ENCODE measurements at regions of chr12 and their contacts with region 1.

Region 1: GRCh38 chr12:111451649-111452129 is 46.0 kb downstream of the SH2B3 start:
- DNase-seq: peak; percentile 54
- CTCF ChIP-seq: peak; percentile 72

Region 2: DNA sequence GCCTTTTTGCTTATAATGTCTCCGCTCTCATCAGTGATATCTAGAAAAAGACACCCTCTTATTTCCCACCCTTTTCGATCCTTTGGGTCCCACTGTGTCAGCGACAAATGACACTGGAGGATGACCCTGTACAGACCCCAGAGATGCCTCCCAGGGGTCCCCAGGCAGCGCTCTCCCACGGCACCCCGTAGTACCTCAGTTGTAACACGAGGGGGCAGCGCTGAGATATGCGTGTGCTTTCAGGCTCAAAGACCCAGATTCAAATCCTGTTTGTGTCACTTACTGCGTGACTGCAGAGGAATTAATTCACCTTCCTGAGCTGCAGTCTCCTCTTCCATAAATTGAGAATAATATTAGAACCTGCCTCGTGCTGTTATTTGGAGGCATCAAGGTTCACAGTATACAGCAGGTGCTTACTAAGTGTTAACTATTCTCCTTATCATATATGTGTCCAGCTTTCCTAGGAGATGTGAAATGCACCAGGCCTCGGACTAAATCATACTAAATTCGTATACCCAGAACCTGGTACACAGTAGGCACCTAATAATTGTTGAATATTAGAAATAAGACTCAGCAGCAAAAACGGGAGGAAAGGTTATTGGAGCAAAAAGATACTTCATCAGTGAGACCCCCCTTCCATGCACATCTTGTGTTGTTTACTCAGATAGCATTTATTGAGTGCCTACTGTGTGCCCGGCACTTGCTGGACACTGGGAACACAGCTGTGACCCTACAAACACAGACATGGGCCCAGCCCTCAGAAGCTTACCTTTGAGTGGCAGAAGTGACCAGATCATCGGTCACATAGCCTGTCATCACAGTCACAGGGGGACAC is 182.7 kb before region 1 on chr12:
- CTCF ChIA-PET with region 1: no interaction called
- POLR2A ChIA-PET with region 1: no interaction called
- DNase-seq: peak; percentile 43
- CTCF ChIP-seq: peak; percentile 28

Region 3: DNA sequence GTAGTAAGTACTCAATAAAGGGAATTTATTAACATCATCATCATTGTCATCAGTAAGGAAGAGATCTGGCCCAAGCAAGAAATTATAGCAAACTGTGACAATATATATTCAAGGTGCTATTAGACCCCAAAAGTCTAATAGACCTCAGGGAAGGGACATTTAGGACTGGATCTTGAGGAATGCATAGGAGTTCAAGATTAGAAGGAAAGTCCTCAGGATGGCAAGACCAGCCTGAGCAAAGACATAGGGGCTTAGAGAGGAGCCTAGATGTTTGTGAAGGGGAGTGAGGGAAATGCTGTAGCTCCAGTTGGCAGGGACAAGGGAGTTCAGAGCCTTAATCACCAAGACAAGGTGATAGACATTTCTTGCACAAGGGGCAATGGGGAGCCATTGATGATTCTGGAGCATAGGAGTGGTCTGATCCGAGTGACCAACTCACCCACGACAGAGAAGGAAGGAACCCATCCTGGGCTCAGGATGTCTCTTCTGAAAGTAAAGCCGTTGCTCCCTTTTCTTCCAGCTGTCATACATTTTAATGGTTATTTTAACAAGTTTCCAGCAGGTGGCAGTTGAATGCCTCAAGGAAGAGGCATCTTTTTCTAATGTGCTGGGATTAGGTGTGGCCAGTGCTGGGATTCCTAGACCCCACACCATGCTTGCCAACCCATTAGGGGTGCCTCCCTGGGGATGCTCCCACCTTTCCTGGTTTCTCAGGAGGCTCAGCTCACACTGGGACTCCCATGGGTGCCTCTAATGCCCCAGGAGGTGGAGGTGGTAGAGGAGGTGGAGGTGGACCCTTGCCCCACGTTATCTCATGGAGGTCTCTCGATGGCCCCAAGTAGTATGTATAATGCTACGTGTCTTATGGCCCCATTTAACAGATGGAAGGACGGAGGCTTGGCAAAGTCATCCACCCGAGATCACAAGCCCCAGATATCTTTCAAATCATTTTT is 120.6 kb before region 1 on chr12:
- CTCF ChIA-PET with region 1: interaction called, 23 read pairs
- POLR2A ChIA-PET with region 1: no interaction called
- DNase-seq: peak; percentile 59
- CTCF ChIP-seq: peak; percentile 44

Region 4: DNA sequence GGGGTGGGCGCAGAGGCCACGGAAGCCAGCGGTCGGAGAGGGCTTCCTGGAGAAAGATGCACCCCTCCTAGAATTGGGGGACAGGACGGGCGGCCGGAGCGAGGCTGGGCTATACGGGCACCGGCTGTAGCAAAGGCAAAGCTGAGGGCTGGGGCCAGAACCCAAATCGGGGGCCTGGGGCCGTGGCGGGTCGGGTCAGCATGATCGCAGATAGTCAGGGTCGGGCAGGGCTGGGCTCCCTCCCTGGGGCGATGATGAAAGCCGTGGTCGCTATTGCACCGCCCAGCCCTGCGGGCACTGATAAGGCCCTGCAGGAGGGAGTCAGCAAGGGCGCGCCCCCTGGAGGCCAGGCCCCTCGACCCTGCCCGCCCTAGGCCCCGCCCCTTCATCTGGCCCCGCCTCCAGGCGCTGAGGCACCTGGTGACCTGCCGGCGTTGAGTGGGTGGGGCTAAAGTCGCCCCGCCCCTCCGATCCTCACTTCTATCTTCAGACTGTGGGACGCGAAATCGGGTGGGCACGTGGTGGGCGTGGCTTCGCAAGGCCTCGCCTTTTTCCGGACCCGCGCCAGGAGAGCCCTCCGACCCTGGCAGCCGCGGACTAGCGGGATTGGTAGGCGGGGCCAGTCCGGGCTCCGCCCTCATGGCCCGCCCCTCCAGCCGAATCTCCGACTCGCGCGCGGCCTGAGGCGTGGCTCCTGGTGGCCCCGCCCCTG is 46.4 kb before region 1 on chr12:
- CTCF ChIA-PET with region 1: interaction called, 1,216 read pairs
- POLR2A ChIA-PET with region 1: interaction called, 3 read pairs
- DNase-seq: peak; percentile 98
- CTCF ChIP-seq: peak; percentile 61

Region 5: GRCh38 chr12:111434680-111435338 is 16.9 kb before region 1 on chr12:
- CTCF ChIA-PET with region 1: interaction called, 40 read pairs
- POLR2A ChIA-PET with region 1: interaction called, 5 read pairs
- DNase-seq: peak; percentile 76
- CTCF ChIP-seq: no peak

Region 6: DNA sequence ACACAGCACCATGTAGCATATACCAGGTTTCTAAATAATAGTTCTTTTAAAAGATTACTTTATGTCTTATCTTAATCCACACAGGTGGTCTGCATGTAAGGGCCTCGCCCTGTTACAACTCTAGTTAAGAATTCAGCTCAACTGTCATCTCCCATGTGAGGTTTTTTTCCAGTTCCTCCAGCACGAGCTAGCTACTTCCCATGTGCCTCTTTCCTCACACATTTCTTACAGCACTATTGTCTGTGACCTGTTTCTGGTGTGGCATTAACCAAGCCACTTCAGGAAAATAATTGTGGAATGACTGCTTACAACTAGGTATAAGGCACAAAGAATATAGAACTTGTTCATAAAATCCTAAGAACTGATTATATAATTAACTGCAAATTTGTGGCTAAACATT is 19.5 kb after region 1 on chr12:
- CTCF ChIA-PET with region 1: interaction called, 24 read pairs
- POLR2A ChIA-PET with region 1: no interaction called
- DNase-seq: no peak
- CTCF ChIP-seq: no peak

Region 7: GRCh38 chr12:111529424-111530368 is 78.0 kb after region 1 on chr12:
- CTCF ChIA-PET with region 1: interaction called, 22 read pairs
- POLR2A ChIA-PET with region 1: no interaction called
- DNase-seq: peak; percentile 81
- CTCF ChIP-seq: peak; percentile 67